Prostate gland (tissue), 2 donors: ENCODE measurements at regions of chrX and their contacts with region 1.

Region 1: DNA sequence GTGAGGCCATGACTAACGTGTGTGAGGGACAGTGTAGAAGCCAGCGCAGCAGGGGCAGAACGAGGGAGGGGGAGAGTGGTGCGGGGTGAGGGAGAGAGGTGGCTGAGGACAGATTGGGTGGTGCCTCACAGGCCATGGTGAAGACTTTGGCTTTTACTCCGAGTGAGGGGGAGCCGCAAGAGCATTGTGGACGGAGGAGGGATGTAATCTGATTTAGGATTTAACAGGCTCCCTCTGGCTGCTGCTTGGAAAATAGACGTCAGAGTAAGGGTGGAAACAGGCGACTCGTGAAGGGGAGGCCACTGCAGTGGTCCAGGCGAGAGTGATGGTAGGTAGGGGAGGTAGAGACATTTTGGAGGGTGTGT is 13.0 kb downstream of the PPP1R3F start:
- DNase-seq: no peak
- H3K4me3 ChIP-seq: no peak overlapping the region
- H3K27ac ChIP-seq: no peak overlapping the region
- H3K4me1 ChIP-seq: no peaks in the 10 kb centered on the region
- H3K27me3 ChIP-seq: no peaks in the 10 kb centered on the region
- CTCF ChIP-seq: peak in 1 of 4 experiments; percentile 29
- POLR2A ChIP-seq: no peak

Region 2: GRCh38 chrX:49754233-49754857 is 471.7 kb after region 1 on chrX:
- intact Hi-C with region 1: loop called (anchors 10 kb)
- DNase-seq: peak; percentile 3
- H3K4me3 ChIP-seq: no peak overlapping the region
- H3K27ac ChIP-seq: no peak overlapping the region
- H3K4me1 ChIP-seq: no peaks in the 10 kb centered on the region
- H3K27me3 ChIP-seq: no peaks in the 10 kb centered on the region
- CTCF ChIP-seq: peak in 3 of 4 experiments; percentile 43 to 61 (median 60)
- POLR2A ChIP-seq: no peak

Region 3: GRCh38 chrX:49840679-49841078 is 558.0 kb after region 1 on chrX:
- intact Hi-C with region 1: loop called (anchors 10 kb)
- DNase-seq: peak; percentile 36
- H3K4me3 ChIP-seq: no peak overlapping the region
- H3K27ac ChIP-seq: no peak overlapping the region
- H3K4me1 ChIP-seq: no peaks in the 10 kb centered on the region
- H3K27me3 ChIP-seq: no peaks in the 10 kb centered on the region
- CTCF ChIP-seq: peak in 3 of 4 experiments; percentile 37 to 55 (median 50)
- POLR2A ChIP-seq: no peak